ENCODE measurements at regions of chr4 and their contacts with region 1.

Region 1: DNA sequence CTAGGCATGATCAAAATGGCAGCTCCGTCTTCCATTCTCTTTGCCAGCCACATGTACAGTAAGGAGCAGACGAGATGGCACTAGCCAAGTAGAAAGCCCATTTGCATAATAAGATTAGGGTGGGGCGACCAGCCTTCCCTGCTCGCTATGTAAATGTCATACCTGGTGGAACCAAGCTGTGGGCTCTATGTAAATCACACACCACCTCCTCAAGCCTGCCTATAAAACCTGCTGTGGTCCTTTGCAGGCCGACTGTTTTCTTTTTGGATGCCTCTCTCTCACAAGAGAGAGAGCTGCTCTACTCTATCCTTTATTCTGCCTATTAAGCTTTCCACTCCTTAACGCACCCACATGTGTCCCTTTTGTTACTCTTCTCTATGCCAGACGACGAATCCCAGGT is 1472.7 kb downstream of the ARAP2 start:
- DNase-seq: no peak
- H3K4me3 ChIP-seq: no peak overlapping the region
- H3K27ac ChIP-seq: no peak overlapping the region
- H3K4me1 ChIP-seq: no peaks in the 10 kb centered on the region
- H3K27me3 ChIP-seq: no peaks in the 10 kb centered on the region
- CTCF ChIP-seq: no peak

Region 2: GRCh38 chr4:33512397-33512796 is 1259.2 kb before region 1 on chr4:
- intact Hi-C with region 1: no loop called
- DNase-seq: no peak
- H3K4me3 ChIP-seq: no peak overlapping the region
- H3K27ac ChIP-seq: no peak overlapping the region
- H3K4me1 ChIP-seq: no peaks in the 10 kb centered on the region
- H3K27me3 ChIP-seq: no peaks in the 10 kb centered on the region
- CTCF ChIP-seq: no peak

Region 3: GRCh38 chr4:34826660-34827059 is 55.0 kb after region 1 on chr4:
- intact Hi-C with region 1: loop called (anchors 5 kb)
- DNase-seq: no peak
- H3K4me3 ChIP-seq: no peak overlapping the region
- H3K27ac ChIP-seq: no peak overlapping the region
- H3K4me1 ChIP-seq: no peaks in the 10 kb centered on the region
- H3K27me3 ChIP-seq: no peaks in the 10 kb centered on the region
- CTCF ChIP-seq: no peak

Measured in tibial artery (tissue), 4 donors.